ENCODE measurements at regions of chr1 and their contacts with region 1.

Region 1: DNA sequence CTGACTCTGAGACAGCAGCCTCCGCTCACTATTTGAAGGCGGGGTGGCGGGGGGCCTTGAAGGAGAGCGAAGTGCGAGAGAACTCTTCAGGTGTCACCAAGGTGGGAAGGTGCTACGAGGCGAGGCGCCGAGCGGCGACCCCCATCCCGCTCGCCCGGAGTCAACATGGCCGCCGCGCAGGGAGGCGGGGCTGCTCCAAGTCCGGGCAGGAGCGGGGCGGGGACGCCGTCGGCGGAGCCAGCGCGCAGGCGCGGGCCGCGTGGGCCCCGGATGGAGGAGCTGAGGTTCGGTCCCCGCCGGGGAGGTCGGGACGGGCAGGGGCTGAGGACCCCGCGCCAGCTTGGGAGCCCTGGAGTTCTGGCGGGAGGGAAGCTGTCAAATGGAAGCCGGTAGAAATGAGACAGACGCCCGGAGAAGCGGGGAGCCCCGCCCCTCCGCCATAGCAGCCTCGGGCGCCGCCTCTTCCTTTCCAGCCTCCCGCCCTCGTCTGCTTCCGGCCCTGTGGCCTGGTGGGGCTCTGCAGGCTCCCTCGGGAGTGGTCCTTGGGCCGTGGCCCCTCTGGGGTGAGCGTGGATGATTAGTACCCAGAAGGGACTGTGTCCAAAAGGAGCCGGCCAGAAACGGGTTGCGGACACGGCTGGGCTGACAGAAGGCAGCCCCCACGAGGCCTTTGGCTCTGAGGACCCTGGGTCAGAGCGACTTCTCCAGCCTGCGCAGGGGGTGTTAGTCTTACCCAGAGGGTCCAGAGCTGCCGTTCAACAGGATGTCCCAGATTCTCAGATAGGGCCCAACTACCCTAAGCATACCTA is at the start of gene PIGV:
- DNase-seq: peak; percentile 87
- H3K4me3 Mint-ChIP-seq: peak within 1 kb of the TSS; percentile 83
- H3K27ac Mint-ChIP-seq: peak within 1 kb of the TSS; percentile 97
- H3K4me1 Mint-ChIP-seq: peaks cover 58% of the 10 kb centered on the region
- H3K27me3 Mint-ChIP-seq: no peaks in the 10 kb centered on the region
- total RNA-seq, gene PIGV: 10.6 to 11.2 TPM

Region 2: DNA sequence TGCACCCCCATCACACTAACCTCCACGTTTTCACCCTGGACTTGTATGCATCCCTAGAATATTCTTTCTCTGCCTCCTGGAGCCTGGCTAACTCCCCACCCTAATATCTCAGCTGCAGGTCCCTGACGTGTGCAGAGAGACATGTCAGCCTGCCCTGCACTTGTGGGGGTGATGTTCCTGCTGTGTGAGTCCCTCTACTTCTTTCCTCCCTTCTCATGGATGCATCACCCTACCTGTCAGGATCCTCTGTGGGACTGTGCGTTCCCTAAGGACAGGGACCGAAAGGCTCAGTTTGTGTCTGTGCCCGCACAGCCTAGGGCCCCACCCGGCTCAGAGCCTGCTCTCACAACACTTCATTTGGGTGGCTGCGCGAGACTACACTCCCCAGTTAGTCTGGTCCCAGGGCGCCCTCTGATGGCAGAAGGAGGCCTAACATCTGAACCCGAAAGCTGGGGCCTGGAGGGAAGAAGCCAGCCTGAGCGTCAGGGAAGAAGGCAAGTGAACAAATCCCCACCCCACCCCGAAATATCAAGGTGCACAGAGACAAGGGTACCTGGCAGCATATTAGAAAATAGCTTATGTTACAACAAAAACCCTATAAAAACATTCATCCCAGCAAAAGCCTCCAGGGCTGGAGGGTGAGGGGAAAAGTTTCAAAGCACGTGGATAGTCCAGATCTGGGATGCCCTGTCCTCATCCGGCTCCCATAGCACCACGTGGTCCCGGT is 466.4 kb before region 1 on chr1:
- CTCF ChIA-PET with region 1: no interaction called
- intact Hi-C with region 1: loop called (anchors 5 kb)
- DNase-seq: peak; percentile 99
- H3K4me3 Mint-ChIP-seq: peak overlapping the region; percentile 65
- H3K27ac Mint-ChIP-seq: peak overlapping the region; percentile 90
- H3K4me1 Mint-ChIP-seq: peaks cover 44% of the 10 kb centered on the region
- H3K27me3 Mint-ChIP-seq: no peaks in the 10 kb centered on the region

Region 3: DNA sequence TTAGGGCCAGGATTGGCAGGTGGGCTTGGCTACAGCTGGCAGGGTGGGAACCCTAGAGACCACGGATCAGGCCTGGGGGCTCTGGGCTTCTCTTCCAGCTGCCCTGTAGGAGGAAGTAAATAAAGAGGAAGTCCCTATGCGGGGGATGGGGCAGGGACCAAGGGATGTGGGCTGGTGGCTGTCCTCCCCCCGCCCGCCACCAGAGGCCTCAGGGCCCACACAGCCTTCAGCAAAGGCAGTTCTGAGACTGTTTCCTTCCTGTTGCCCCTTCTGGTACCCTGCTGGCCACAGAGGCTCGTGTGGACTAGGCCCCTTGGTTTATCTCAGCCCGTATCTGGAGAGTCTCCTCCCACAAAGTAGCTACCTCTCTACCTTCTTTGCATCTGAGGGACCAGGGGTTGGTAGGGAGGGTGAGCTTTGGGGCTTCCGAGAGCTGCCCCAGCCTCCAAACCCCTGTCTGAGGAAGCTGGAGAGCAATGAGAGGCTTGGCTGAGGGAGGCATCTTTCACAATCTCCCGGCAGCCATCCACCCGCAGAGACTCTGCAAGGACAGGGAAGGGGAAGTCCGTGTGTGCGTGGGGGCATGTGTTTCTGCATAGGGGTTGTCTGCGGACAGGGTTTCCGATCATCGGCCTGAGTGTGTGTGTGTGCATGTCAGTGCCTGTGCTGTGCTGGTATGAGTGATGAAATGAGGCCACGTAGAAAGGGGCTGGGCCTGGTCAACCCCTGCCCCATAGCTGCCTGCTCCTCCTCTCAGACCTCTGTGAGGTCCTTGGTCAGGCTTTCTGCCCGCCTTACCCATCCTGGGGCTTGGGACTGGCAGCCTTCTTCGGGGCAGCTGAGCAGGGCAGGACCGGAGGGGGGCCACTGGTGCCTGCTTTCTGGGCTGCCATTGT is 245.8 kb before region 1 on chr1:
- CTCF ChIA-PET with region 1: interaction called, 4 read pairs
- intact Hi-C with region 1: loop called (anchors 2 kb)
- DNase-seq: peak; percentile 91
- H3K4me3 Mint-ChIP-seq: peak overlapping the region; percentile 73
- H3K27ac Mint-ChIP-seq: peak overlapping the region; percentile 95
- H3K4me1 Mint-ChIP-seq: peaks cover 81% of the 10 kb centered on the region
- H3K27me3 Mint-ChIP-seq: no peaks in the 10 kb centered on the region

Region 4: DNA sequence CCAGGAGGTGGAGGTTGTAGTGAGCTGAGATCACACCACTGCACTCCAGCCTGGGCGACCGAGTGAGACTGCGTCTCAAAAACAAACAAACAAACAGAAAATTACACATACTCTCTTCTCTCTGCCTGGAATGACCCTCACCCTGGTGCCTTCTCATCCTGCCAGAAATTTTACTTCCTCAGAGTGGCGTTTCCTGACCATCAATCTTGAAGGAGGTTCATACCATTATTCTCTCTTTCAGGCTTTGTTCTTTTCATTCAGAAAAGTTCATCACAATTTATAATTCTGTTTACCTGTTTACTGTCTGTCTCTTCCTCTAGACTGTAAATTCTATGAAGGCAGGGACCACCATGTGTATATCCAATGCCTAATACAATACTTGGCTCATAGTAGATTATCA is 179.0 kb before region 1 on chr1:
- CTCF ChIA-PET with region 1: interaction called, 178 read pairs
- intact Hi-C with region 1: no loop called
- DNase-seq: no peak
- H3K4me3 Mint-ChIP-seq: no peak overlapping the region
- H3K27ac Mint-ChIP-seq: no peak overlapping the region
- H3K4me1 Mint-ChIP-seq: no peaks in the 10 kb centered on the region
- H3K27me3 Mint-ChIP-seq: peaks cover under 1% of the 10 kb centered on the region

Region 5: DNA sequence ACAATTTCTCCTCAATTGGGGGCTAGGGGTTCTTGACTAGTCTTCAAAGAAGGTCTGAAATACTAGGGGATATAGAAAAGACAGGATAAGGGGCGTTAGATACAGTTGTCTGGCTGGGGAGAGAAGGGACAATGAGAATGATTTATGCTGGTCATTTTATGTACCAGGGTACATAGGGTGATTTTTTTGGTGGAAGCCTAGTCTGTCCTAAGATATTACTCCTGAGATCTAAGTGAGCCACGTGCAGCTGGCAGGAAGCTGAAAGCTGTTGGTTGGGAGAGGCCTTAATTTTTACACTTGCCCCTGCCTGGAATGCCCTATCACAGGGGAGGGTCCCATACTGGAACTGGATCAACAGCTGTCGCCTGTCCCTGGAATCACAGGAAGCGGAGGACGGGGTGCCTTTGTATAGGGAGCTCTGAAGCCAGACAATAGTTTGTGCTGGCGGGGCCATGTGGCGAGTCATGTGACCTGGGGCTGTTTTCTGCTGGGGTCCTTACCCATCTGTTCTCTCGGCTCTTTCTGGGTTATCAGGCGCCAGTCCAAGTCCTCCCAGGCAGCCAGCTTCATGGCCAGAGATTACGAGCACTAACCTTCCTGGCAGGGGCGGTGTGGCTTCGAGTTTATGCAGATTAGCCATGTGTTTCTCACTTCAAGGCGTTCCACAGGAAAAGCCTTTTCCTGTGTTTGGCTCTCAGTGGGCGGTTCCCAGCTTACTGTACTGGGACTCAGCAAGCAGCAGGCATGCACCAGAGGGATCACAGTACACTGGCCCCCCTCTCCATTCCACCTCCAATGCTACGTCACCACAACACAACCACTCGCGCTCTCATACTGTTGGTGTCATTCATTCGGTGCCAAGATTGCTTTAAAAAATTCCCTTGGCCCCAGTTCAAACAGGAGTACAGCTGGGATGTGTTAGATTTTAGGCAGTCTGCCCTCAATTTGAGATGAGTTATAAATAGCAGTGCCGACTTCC is 64.6 kb before region 1 on chr1:
- CTCF ChIA-PET with region 1: interaction called, 16 read pairs
- intact Hi-C with region 1: loop called (anchors 2 kb)
- DNase-seq: peak; percentile 72
- H3K4me3 Mint-ChIP-seq: peak overlapping the region; percentile 30
- H3K27ac Mint-ChIP-seq: peak overlapping the region; percentile 82
- H3K4me1 Mint-ChIP-seq: peaks cover 89% of the 10 kb centered on the region
- H3K27me3 Mint-ChIP-seq: no peaks in the 10 kb centered on the region

Region 6: GRCh38 chr1:26771643-26772321 is 16.1 kb before region 1 on chr1:
- CTCF ChIA-PET with region 1: interaction called, 6 read pairs
- intact Hi-C with region 1: loop called (anchors 2 kb)
- DNase-seq: peak; percentile 58
- H3K4me3 Mint-ChIP-seq: no peak overlapping the region
- H3K27ac Mint-ChIP-seq: peak overlapping the region; percentile 90
- H3K4me1 Mint-ChIP-seq: peaks cover 22% of the 10 kb centered on the region
- H3K27me3 Mint-ChIP-seq: no peaks in the 10 kb centered on the region

Region 7: GRCh38 chr1:26833432-26834405 is 45.8 kb after region 1 on chr1:
- CTCF ChIA-PET with region 1: interaction called, 13 read pairs
- intact Hi-C with region 1: loop called (anchors 1 kb)
- DNase-seq: peak; percentile 96
- H3K4me3 Mint-ChIP-seq: peak overlapping the region; percentile 57
- H3K27ac Mint-ChIP-seq: peak overlapping the region; percentile 96
- H3K4me1 Mint-ChIP-seq: peaks cover 59% of the 10 kb centered on the region
- H3K27me3 Mint-ChIP-seq: no peaks in the 10 kb centered on the region

Region 8: DNA sequence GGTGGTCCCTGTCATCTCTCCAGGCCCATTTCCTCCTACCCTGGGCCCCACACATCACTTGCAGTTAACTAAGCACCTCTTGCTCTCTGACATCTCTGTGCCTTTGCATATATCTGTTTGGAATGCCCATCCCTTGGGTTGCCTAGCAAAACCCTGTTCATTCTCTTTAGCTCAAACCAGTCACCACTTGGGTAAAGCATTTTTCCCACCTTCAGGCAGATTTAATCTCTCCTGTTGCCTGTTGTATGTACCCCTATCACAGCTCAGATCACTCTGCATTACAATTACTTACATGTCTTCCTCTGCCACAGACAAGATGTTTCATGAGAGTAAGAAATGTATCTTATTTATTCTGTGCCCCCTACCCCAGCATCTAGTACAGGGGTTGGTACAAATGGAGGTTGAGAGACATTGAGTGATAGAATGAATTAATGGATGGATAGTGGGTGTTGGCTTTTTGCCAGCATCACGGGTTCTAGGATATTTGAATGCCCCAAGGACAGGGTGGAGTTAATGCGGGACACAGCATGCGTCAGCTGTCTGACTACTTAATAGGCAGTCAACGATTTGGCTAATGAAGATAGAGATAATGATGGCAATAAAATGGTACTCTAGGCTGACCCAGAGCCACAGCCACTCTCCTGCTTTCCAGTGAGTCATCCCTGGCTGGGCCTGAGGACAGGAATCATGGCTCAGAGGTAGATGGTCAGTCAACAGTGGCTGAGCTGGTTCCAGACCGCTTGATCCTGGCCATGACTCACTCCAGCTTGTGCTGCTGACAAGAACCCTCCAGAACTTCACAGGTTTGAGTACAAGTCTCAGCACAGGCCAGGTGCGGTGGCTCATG is 119.4 kb after region 1 on chr1:
- CTCF ChIA-PET with region 1: no interaction called
- intact Hi-C with region 1: no loop called
- DNase-seq: no peak
- H3K4me3 Mint-ChIP-seq: no peak overlapping the region
- H3K27ac Mint-ChIP-seq: no peak overlapping the region
- H3K4me1 Mint-ChIP-seq: no peaks in the 10 kb centered on the region
- H3K27me3 Mint-ChIP-seq: no peaks in the 10 kb centered on the region

Measured in activated naive CD4-positive, alpha-beta T cell treated with anti-CD3 and anti-CD28 coated beads for 36 hours (primary cell).